Ovary (tissue), 10 donors: ENCODE measurements at regions of chr3 and their contacts with region 1.

Region 1: DNA sequence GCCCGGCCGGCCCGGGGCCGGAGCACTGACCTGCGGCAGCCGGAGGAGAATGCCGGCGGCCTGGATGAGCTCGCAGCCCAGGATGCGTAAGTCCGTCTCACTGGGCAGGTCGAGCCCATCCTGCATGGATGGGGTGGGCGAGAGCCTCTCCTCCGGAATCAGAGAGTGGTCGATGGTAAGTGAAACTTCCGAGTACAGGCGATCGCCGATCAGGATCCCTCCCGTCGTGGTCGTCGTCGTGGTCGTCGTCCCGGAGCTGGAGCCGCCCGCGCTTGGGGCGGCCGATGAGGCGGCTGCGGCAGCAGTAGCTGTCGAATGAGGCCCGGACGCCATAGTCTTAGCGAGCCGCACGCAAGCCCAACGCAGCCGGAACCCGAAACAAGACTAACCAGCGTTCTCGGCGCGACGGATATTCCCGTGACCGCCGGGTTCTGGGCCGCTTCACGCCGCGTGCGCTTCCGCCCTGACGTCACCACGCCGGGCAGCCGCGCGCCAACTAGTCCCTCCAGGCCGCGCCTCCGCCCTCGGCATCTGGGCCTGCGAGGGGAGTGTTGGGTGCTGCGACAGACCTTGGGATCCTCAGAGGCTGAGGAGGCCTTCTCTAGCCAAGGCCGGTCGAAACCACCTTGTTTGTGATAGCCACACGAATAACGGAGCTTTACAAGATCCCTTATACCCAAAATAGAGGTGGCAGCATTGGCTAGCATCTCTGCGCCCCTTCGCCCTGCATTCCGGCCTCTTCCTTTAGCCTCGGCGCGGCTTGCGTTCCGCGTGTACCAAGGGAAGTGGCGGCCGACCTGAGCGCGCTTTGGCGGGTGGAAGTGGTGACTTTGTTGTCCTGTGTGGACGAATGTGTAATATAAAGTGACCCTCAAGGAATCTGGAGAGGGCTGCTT is at the start of gene CCNL1:
- DNase-seq: peak; percentile 97 to 99 (median 98)
- H3K4me3 ChIP-seq: peak within 1 kb of the TSS; percentile 99
- H3K27ac ChIP-seq: peak within 1 kb of the TSS; percentile 99
- H3K4me1 ChIP-seq: peaks cover 3% of the 10 kb centered on the region
- H3K27me3 ChIP-seq: no peaks in the 10 kb centered on the region
- CTCF ChIP-seq: peak in 1 of 3 donors; percentile 51
- EP300 ChIP-seq: peak; percentile 90
- POLR2A ChIP-seq: peak; percentile 100
- total RNA-seq, gene CCNL1: 86.8 to 514 (median 115) TPM

Region 2: DNA sequence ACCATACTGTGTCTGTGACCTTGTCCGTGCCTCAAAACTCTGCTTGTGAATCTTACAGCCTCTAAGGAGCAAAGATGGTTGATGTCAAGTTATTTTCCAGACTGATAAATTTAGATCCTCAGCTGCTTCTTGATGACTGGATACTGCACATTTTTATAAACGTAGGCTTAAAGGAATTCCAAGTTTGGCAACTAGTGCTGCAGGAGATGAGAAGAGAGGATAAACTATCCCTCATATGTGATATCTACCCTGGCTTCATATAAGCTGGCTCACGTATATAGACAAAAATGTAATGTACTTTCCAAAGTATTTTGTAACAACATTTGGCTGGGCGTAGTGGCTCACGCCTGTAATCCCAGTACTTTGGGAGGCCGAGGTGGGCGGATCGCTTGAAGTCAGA is 1200.0 kb before region 1 on chr3:
- intact Hi-C with region 1: no loop called
- DNase-seq: no peak
- H3K4me3 ChIP-seq: no peak overlapping the region
- H3K27ac ChIP-seq: no peak overlapping the region
- H3K4me1 ChIP-seq: no peaks in the 10 kb centered on the region
- H3K27me3 ChIP-seq: no peaks in the 10 kb centered on the region
- CTCF ChIP-seq: no peak
- EP300 ChIP-seq: no peak
- POLR2A ChIP-seq: no peak

Region 3: DNA sequence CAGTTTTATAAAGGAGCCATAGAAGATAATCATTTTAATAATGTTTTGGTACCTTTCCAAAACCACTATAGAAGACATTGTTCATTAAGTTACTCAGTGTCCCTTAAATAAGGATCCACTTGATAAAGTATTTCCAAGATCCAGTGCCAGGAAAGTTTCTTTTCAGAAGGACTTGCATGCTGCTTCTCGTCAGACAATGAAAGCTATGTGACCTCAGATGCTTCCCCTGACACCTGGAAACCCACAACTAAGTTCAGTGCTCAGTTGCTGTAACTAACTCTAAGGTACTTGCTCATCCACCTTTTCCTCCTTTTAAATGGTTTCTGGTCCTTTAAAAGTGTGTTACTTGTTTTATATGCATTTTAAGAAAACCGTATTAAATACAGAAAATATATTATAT is 612.4 kb before region 1 on chr3:
- intact Hi-C with region 1: loop called in 1 of 4 experiments (anchors 10 kb)
- DNase-seq: no peak
- H3K4me3 ChIP-seq: no peak overlapping the region
- H3K27ac ChIP-seq: no peak overlapping the region
- H3K4me1 ChIP-seq: peaks cover 9% of the 10 kb centered on the region
- H3K27me3 ChIP-seq: no peaks in the 10 kb centered on the region
- CTCF ChIP-seq: no peak
- EP300 ChIP-seq: no peak
- POLR2A ChIP-seq: no peak

Region 4: GRCh38 chr3:157081681-157082210 is 78.3 kb before region 1 on chr3:
- intact Hi-C with region 1: no loop called
- DNase-seq: peak; percentile 87 to 93 (median 93)
- H3K4me3 ChIP-seq: no peak overlapping the region
- H3K27ac ChIP-seq: no peak overlapping the region
- H3K4me1 ChIP-seq: peaks cover 3% of the 10 kb centered on the region
- H3K27me3 ChIP-seq: no peaks in the 10 kb centered on the region
- CTCF ChIP-seq: peak; percentile 77 to 97 (median 96)
- EP300 ChIP-seq: no peak
- POLR2A ChIP-seq: no peak

Region 5: DNA sequence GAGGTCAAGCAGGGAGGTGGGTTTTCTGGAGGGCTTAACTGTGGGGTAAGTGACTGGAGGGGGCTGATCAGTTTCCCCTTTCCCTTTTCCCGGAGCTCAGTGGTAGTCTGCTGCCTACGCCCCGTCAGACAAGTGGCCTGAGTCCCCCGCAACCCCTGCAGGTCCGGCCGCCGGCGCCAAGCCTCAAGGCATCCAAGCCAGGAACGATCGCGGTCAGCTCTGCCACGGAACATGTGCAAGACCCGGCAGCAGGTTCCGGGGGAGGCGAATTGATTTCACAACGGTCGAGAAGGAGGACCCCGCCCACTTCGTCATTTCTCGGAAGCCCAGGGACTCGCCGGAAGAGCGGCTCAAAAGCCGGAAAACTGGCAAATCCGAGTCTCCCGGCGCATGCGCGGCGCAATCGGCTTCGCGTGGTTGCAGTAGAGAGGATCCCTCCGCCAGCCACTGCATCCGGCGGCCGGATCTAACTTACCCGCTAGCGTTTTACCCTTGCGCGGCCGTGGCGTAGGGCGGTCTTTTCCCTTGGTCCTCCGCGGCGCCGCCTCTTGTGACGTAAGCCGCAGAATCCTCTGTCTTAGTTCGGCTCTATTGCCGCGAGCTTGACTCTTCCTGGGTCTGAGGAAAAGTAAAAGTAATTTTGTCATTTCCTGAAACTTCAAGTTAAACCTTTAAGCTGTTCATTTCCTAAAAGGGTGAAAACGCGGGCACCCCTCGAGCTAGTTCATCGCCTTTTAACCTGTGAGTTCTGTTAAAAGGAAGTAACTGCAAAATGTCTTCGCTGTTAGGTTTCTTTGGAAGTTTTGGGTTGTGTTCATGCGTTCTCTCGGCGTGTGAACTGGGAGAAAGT is 14.9 kb after region 1 on chr3:
- intact Hi-C with region 1: loop called in 3 of 4 experiments (anchors 1 to 2 kb)
- DNase-seq: peak; percentile 98 to 100 (median 99)
- H3K4me3 ChIP-seq: peak overlapping the region; percentile 55
- H3K27ac ChIP-seq: peak overlapping the region; percentile 91 to 96
- H3K4me1 ChIP-seq: peaks cover 3% of the 10 kb centered on the region
- H3K27me3 ChIP-seq: no peaks in the 10 kb centered on the region
- CTCF ChIP-seq: peak in 1 of 3 donors; percentile 14
- EP300 ChIP-seq: peak; percentile 99
- POLR2A ChIP-seq: peak; percentile 98

Region 6: DNA sequence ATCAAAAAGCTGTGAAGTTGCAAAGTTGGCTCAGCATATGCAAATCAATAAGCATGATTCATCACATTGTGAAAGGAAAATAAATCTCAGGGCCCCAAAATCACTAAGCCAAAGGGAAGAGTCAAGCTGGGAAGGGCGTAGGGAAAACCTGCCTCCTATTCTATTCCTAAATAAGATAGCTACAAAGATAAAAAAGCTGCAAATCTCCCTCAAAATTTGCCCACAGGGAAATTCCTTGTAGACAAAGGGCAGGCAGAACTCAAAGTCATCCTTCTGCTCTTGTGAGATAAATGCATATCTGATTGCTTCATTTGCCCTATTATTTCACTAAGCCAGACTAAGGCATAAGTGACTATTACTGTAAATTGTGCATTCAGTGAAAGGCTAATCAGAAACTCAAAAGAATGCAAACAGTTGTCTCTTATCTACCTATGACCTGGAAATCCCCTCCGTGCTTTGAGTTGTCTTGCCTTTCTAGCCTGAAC is 30.4 kb after region 1 on chr3:
- intact Hi-C with region 1: no loop called
- DNase-seq: no peak
- H3K4me3 ChIP-seq: no peak overlapping the region
- H3K27ac ChIP-seq: no peak overlapping the region
- H3K4me1 ChIP-seq: no peaks in the 10 kb centered on the region
- H3K27me3 ChIP-seq: no peaks in the 10 kb centered on the region
- CTCF ChIP-seq: no peak
- EP300 ChIP-seq: no peak
- POLR2A ChIP-seq: no peak